CD8-positive, alpha-beta T cell (primary cell): ENCODE measurements at regions of chrX and their contacts with region 1.

Region 1: DNA sequence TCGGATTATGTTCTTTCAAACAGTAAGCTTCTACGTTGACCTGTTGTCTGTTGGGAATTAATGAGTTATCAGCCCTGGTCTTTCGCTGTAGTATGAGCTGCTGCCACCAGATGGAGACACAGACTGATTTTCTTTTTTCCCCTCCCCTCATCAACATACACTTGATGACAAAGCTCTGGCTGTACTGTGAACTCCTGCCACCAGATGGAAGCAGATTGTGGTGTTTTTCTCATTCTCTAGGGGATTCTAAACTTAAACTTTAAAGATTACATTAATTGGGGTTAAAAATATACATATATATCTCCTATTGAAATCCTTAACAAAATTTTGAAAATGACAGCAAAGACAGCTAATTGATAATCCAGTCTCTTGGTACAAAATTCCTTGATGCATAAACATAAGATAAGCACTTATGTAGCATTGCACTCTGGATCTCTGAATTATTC is 44.8 kb downstream of the SMS start:
- DNase-seq: peak; percentile 29 to 80 (median 56)
- ATAC-seq: peak; percentile 98
- H3K4me3 ChIP-seq: no peak overlapping the region
- H3K4me3 Mint-ChIP-seq: no peak overlapping the region
- H3K27ac ChIP-seq: no peak overlapping the region
- H3K27ac Mint-ChIP-seq: no peak overlapping the region
- H3K4me1 ChIP-seq: no peaks in the 10 kb centered on the region
- H3K4me1 Mint-ChIP-seq: peaks cover 6% of the 10 kb centered on the region
- H3K27me3 ChIP-seq: no peaks in the 10 kb centered on the region
- H3K27me3 Mint-ChIP-seq: no peaks in the 10 kb centered on the region
- CTCF ChIP-seq: peak; percentile 71

Region 2: DNA sequence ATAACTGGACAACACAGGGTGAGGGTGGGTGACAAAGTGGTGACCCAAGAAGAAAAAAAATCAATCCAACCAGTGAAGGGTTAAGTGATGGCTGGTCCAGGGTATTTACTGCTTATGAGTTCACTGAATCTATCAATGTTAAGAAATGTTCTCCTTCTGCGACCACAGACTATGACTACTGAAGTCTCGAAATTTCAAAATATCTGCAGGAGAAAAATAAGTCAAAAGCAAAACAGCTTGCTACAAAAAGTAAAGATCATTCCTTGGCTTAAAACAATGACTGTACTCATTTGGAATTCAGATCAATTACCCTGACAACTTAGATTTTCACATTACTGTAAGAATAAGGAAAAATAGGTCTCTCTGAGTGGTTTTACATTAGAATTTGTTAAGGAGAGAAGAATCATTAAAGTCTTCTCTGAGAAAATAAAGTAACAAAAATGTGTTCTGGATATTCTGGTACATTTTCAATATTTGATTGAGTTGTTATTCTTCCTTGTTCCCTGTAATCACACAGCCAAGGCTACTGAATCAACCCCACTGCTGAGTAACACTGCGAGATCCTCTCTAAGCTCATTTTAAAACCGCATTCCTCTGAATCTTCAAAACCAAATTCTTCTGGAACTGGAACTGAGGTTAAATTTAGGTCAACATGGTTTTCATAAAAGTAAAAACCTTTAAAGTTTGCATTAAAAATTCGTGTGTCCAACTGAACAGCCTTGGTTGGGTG is 250.2 kb before region 1 on chrX:
- CTCF ChIA-PET with region 1: no interaction called
- POLR2A ChIA-PET with region 1: no interaction called
- intact Hi-C with region 1: no loop called
- DNase-seq: no peak
- ATAC-seq: no peak
- H3K4me3 ChIP-seq: no peak overlapping the region
- H3K4me3 Mint-ChIP-seq: no peak overlapping the region
- H3K27ac ChIP-seq: no peak overlapping the region
- H3K27ac Mint-ChIP-seq: no peak overlapping the region
- H3K4me1 ChIP-seq: no peaks in the 10 kb centered on the region
- H3K4me1 Mint-ChIP-seq: no peaks in the 10 kb centered on the region
- H3K27me3 ChIP-seq: no peaks in the 10 kb centered on the region
- H3K27me3 Mint-ChIP-seq: peaks cover 11% of the 10 kb centered on the region
- CTCF ChIP-seq: no peak

Region 3: GRCh38 chrX:21972721-21973120 is 12.6 kb before region 1 on chrX:
- CTCF ChIA-PET with region 1: interaction called, 19 read pairs
- POLR2A ChIA-PET with region 1: no interaction called
- intact Hi-C with region 1: no loop called
- DNase-seq: peak in 8 of 9 experiments; percentile 2 to 74 (median 37)
- ATAC-seq: peak; percentile 95
- H3K4me3 ChIP-seq: no peak overlapping the region
- H3K4me3 Mint-ChIP-seq: peak overlapping the region; percentile 57
- H3K27ac ChIP-seq: no peak overlapping the region
- H3K27ac Mint-ChIP-seq: peak overlapping the region; percentile 82
- H3K4me1 ChIP-seq: peaks cover 18% of the 10 kb centered on the region
- H3K4me1 Mint-ChIP-seq: peaks cover 22% of the 10 kb centered on the region
- H3K27me3 ChIP-seq: no peaks in the 10 kb centered on the region
- H3K27me3 Mint-ChIP-seq: no peaks in the 10 kb centered on the region
- CTCF ChIP-seq: no peak

Region 4: DNA sequence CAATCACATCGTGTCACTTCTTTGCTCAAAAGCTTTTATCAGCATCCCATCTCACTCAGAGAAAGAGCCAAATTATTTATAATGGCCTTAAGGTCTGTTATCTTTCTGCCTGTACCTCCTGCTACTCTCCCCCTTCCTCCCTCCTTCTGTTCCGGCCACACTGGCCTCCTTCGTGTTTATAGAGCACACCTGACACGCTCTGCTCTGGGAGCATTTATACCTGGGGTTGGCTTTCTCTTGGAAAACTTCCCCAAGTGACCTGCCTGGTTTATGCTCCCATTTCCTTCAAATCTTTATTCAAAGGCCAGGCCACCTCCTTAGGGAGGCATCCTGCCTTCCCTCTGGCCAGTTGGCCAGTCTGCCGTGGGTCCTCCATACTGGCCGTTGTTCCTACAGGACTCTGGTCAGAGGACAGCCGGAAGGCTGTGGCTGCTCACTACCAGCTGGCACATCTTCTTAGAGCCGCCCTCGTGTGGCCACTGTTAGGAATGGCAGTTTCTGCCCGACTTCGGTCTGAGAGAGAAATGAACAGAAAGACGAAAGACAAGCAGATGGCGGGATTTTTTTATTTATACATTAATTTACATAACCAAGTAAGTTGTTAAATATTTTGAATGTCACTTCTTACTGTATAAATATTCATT is 207.2 kb after region 1 on chrX:
- CTCF ChIA-PET with region 1: interaction called, 10 read pairs
- POLR2A ChIA-PET with region 1: no interaction called
- intact Hi-C with region 1: loop called (anchors 1 to 2 kb)
- DNase-seq: peak; percentile 1 to 65 (median 39)
- ATAC-seq: peak; percentile 63
- H3K4me3 ChIP-seq: no peak overlapping the region
- H3K4me3 Mint-ChIP-seq: no peak overlapping the region
- H3K27ac ChIP-seq: no peak overlapping the region
- H3K27ac Mint-ChIP-seq: no peak overlapping the region
- H3K4me1 ChIP-seq: no peaks in the 10 kb centered on the region
- H3K4me1 Mint-ChIP-seq: peaks cover 3% of the 10 kb centered on the region
- H3K27me3 ChIP-seq: no peaks in the 10 kb centered on the region
- H3K27me3 Mint-ChIP-seq: peaks cover 2% of the 10 kb centered on the region
- CTCF ChIP-seq: peak; percentile 69

Region 5: GRCh38 chrX:22748093-22748999 is 763.0 kb after region 1 on chrX:
- CTCF ChIA-PET with region 1: interaction called, 23 read pairs
- POLR2A ChIA-PET with region 1: no interaction called
- intact Hi-C with region 1: loop called in 1 of 2 experiments (anchors 2 kb)
- DNase-seq: peak in 8 of 9 experiments; percentile 0 to 52 (median 23)
- ATAC-seq: peak; percentile 31
- H3K4me3 ChIP-seq: no peak overlapping the region
- H3K4me3 Mint-ChIP-seq: no peak overlapping the region
- H3K27ac ChIP-seq: no peak overlapping the region
- H3K27ac Mint-ChIP-seq: no peak overlapping the region
- H3K4me1 ChIP-seq: no peaks in the 10 kb centered on the region
- H3K4me1 Mint-ChIP-seq: no peaks in the 10 kb centered on the region
- H3K27me3 ChIP-seq: no peaks in the 10 kb centered on the region
- H3K27me3 Mint-ChIP-seq: no peaks in the 10 kb centered on the region
- CTCF ChIP-seq: peak; percentile 57